ENCODE measurements at regions of chr17 and their contacts with region 1.

Region 1: GRCh38 chr17:63611354-63611753 is 10.7 kb downstream of the TACO1 start:
- DNase-seq: no peak
- H3K4me3 ChIP-seq: no peak overlapping the region
- H3K27me3 ChIP-seq: no peaks in the 10 kb centered on the region
- CTCF ChIP-seq: no peak

Region 2: GRCh38 chr17:63419949-63420867 is 191.1 kb before region 1 on chr17:
- CTCF ChIA-PET with region 1: interaction called, 173 read pairs
- POLR2A ChIA-PET with region 1: no interaction called
- DNase-seq: no peak
- H3K4me3 ChIP-seq: no peak overlapping the region
- H3K27me3 ChIP-seq: no peaks in the 10 kb centered on the region
- CTCF ChIP-seq: no peak

Region 3: GRCh38 chr17:63505341-63505740 is 106.0 kb before region 1 on chr17:
- CTCF ChIA-PET with region 1: no interaction called
- POLR2A ChIA-PET with region 1: no interaction called
- DNase-seq: no peak
- H3K4me3 ChIP-seq: no peak overlapping the region
- H3K27me3 ChIP-seq: no peaks in the 10 kb centered on the region; the same call in none of the 2 replicates
- CTCF ChIP-seq: no peak

Region 4: DNA sequence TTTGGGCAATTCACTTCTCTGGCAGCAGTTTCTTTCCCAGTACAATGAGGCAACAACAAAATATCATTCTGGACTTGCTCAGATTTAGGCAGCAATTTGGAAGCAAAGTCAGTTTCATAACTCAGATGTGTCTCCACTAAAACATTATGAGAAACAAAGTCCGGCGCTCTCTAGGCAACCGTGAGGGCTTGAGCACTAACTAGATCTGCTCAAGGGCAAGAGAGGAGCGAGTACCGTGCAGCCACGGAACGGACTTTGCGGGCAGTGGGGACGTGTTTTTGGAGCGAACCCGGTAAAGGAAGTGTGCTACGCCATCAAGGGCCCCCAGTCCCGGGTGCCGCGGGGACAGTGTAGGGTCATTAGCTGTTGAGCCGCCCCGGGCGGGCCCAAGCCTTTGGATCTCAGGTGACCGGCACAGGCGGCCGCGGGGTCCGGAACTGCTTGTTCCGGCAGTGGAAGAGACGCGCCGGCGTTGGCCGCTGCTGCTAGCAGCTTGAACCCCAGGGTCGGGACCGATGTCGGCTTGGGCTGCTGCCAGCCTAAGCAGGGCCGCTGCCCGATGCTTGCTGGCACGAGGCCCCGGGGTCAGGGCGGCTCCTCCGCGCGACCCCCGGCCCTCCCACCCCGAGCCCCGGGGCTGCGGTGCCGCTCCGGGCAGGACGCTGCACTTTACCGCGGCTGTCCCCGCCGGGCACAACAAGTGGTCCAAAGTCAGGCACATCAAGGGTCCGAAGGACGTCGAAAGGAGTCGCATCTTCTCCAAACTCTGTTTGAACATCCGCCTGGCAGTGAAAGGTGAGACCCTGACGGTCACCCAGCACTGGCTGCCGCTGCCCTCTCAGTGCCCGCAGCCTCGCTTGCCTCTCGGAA is 10.6 kb before region 1 on chr17 and contains the start of gene TACO1:
- CTCF ChIA-PET with region 1: interaction called, 23 read pairs
- POLR2A ChIA-PET with region 1: no interaction called
- DNase-seq: no peak
- H3K4me3 ChIP-seq: peak within 1 kb of the TSS; percentile 96
- H3K27me3 ChIP-seq: no peaks in the 10 kb centered on the region
- CTCF ChIP-seq: no peak
- polyA plus RNA-seq, gene TACO1: 19.5 and 23.5 TPM in 2 replicates

Region 5: DNA sequence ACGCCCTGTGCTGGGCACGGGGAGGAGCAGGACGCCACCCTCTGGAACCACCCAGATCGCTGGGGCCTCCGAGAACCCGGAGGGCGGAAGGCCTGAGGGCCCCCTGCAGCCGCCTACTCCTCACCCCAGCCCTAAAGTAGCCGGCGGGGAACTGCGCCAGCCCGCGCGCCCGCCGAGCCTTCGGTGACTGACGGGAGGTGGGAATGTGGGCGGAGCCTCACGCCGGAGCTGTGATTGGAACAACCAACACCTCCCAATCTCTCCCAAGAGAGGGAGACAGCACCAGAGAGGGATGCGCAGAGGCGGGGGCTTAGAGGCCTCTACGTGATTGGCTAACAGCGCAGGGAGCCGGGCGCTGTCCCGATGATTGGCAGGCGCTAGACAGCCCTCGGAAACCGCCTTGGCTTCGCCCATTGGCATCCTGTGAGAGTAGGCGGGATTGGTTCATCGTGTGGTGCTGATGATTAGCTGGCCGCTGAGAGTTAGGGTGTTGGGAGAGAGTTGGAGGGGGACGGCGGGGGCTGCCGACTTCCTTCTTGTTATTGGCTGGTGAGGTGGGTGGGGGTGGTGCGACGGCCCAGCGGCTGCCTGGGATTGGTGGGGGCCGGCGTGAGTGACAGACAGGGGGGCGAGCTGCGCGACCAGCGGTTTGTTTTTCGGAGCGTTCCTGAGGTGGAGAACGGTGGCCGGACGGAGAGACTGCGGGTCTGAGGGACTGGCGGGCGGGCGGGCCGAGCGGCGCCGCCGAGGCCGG is 10.6 kb after region 1 on chr17 and contains the start of gene MAP3K3:
- CTCF ChIA-PET with region 1: interaction called, 32 read pairs
- POLR2A ChIA-PET with region 1: no interaction called
- DNase-seq: peak; percentile 99
- H3K4me3 ChIP-seq: peak within 1 kb of the TSS; percentile 52
- H3K27me3 ChIP-seq: no peaks in the 10 kb centered on the region
- CTCF ChIP-seq: peak; percentile 27; the same call in 1 of the 2 replicates
- polyA plus RNA-seq, gene MAP3K3: 20.2 and 32.5 TPM in 2 replicates

Region 6: GRCh38 chr17:63702721-63703015 is 91.3 kb after region 1 on chr17:
- CTCF ChIA-PET with region 1: no interaction called
- POLR2A ChIA-PET with region 1: no interaction called
- DNase-seq: no peak
- H3K4me3 ChIP-seq: no peak overlapping the region
- H3K27me3 ChIP-seq: no peaks in the 10 kb centered on the region
- CTCF ChIP-seq: no peak

Measured in BJ (cell line).